GM12878 (cell line): ENCODE measurements at regions of chr5 and their contacts with region 1.

Region 1: DNA sequence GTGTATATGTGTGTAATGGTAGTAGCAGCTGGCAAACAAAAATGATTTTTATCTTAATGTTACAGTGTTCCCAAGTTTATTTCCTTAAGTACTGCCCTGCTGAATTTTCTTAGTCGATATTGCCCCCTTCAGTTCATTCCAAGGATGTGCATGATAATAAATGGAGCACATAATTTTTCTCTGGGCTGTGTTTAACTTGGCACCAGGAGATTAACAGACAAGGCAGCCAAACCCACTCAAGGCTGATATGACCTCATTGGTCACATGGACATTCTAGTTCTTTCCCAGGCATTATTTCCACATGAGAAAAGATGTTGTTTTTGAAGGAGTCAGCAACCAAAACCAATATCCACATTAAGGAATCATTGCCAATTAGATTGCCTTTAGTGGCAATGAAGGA is 61.8 kb downstream of the COX7C start:
- DNase-seq: no peak
- ATAC-seq: peak; percentile 82
- H3K4me3 ChIP-seq: no peak overlapping the region
- H3K27ac ChIP-seq: no peak overlapping the region
- H3K4me1 ChIP-seq: no peaks in the 10 kb centered on the region
- H3K27me3 ChIP-seq: no peaks in the 10 kb centered on the region
- CTCF ChIP-seq: peak; percentile 51 to 64 (median 55); a peak in 5 of 6 replicates
- EP300 ChIP-seq: no peak
- POLR2A ChIP-seq: no peak
- RAD21 ChIP-seq: peak; percentile 80

Region 2: DNA sequence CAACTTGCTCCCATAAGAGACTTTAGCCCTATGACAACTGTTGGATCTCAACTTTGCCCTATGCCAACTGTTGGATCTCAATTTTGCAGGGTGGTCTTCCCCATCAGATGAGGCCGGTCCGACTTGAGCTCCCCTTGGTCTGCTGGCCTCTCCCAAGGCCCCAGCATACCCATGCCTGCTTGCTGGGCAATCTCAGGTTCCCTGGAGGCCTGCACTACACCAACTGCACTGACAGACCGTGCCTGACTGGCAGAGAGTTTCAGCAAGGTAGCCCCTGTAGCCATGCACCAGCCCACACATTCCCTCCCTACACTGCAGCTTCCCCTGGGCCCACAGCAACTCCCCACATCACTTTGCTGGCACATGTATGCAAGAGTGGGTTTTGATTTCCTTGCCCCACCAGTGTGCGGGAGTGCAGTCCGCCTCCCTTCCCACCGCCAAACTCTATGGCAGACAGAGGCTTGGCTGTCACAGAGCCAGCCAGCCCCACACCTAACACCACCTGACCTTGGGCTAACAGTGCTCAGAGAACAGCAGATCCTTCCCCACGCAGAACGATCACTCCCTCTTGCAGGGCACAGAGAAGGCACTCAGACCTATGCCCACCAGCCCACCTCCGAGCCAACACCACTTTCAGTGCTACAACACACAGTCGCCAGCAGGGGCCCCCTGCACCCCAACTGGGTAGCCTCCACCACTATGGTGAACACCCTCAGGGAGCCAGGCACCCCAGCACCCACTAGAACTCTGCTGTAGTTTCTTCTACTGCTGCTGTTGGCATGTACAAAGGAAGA is 341.7 kb before region 1 on chr5:
- CTCF ChIA-PET with region 1: no interaction called
- POLR2A ChIA-PET with region 1: no interaction called
- RAD21 ChIA-PET with region 1: no interaction called
- SMC1A ChIA-PET with region 1: no interaction called
- in situ Hi-C with region 1: no loop called
- intact Hi-C with region 1: loop called (anchors 10 kb)
- DNase-seq: no peak
- ATAC-seq: peak; percentile 77
- H3K4me3 ChIP-seq: no peak overlapping the region
- H3K27ac ChIP-seq: no peak overlapping the region
- H3K4me1 ChIP-seq: no peaks in the 10 kb centered on the region
- H3K27me3 ChIP-seq: no peaks in the 10 kb centered on the region; a peak in 1 of 4 replicates
- CTCF ChIP-seq: 0 out of 6 replicates have a peak, but pooled peaks have one; percentile 3 to 11 (median 3)
- EP300 ChIP-seq: no peak
- POLR2A ChIP-seq: no peak
- RAD21 ChIP-seq: no peak

Region 3: DNA sequence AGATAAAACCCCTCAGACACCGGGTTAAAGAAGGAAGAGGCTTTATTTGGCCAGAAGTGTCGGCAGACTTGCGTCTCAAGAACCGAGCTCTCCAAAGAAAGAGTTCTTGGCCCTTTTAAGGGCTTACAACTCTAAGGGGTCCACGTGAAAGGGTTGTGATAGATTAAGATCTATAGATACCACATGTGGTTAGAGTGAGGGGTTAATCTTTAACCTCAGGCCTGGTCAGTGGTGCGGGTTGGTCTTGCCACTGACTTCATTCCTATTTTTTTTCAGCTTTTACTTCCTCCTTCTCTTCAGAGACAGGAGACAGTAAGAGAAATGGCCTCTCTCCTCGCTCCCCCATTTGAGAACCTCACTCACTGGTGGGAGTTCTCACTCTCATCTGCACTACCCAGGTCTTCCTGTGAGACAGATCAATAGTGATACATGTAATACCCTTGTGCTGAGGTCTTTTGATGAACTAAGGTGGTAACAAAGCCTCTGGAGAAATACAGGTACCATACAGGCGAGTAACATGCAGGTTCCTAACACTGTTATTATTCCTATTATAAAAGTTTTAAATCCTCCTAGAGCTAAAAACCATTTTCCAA is 114.2 kb before region 1 on chr5:
- CTCF ChIA-PET with region 1: interaction called, 3 read pairs
- POLR2A ChIA-PET with region 1: no interaction called
- RAD21 ChIA-PET with region 1: interaction called, 3 read pairs
- SMC1A ChIA-PET with region 1: interaction called, 3 read pairs
- in situ Hi-C with region 1: no loop called
- intact Hi-C with region 1: loop called (anchors 2 kb)
- DNase-seq: no peak
- ATAC-seq: peak; percentile 83
- H3K4me3 ChIP-seq: no peak overlapping the region
- H3K27ac ChIP-seq: no peak overlapping the region
- H3K4me1 ChIP-seq: no peaks in the 10 kb centered on the region
- H3K27me3 ChIP-seq: no peaks in the 10 kb centered on the region
- CTCF ChIP-seq: no peak
- EP300 ChIP-seq: no peak
- POLR2A ChIP-seq: no peak
- RAD21 ChIP-seq: no peak

Region 4: DNA sequence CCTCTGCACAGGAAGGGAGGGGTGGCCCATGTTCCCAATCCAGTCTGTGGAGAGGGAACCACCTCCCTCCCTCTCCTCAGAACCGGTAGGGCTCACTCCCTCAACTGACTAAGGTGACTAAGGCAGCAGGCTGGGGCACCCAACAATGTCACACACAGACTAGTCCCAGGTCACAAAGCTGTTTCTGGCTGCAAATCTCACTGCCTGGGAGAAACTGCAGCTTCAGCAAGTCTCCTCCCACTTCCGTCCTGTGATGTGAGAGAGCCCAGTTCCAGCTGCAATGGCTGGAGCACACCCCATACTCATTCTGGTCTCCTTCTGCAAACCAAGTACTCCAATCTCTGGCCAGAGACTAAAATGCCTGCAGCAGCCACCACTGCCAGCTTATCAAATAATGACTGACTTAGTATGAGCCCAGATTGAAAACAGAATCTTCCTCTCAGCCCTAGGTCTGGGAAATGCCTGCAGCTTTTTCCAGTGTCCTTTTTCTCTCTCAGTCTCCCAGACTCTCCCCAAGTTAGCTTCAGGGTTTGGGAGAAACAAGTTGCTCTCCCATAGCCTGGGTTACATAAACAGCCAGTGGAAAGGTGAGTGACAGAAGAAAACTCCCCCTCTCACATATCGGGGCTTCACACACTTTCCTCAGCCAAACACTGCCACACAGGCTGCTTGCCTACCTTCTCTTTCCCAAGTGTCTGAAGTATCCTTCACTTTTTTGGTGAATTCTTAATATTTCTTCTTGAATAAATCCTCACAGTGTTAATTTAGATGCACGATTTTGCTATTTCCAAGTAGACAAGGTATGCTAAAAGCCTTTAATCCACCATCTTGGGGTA is 340.8 kb after region 1 on chr5:
- CTCF ChIA-PET with region 1: no interaction called
- POLR2A ChIA-PET with region 1: no interaction called
- RAD21 ChIA-PET with region 1: no interaction called
- SMC1A ChIA-PET with region 1: no interaction called
- in situ Hi-C with region 1: no loop called
- intact Hi-C with region 1: loop called (anchors 10 kb)
- DNase-seq: peak; percentile 47
- ATAC-seq: peak; percentile 94
- H3K4me3 ChIP-seq: peak overlapping the region; percentile 31; the same call in 1 of the 2 replicates
- H3K27ac ChIP-seq: peak overlapping the region; percentile 67
- H3K4me1 ChIP-seq: peaks cover 11% of the 10 kb centered on the region
- H3K27me3 ChIP-seq: no peaks in the 10 kb centered on the region
- CTCF ChIP-seq: no peak
- EP300 ChIP-seq: no peak
- POLR2A ChIP-seq: peak; percentile 53
- RAD21 ChIP-seq: no peak